Cardiac septum (tissue), 1 donor: ENCODE measurements at regions of chr20 and their contacts with region 1.

Region 1: DNA sequence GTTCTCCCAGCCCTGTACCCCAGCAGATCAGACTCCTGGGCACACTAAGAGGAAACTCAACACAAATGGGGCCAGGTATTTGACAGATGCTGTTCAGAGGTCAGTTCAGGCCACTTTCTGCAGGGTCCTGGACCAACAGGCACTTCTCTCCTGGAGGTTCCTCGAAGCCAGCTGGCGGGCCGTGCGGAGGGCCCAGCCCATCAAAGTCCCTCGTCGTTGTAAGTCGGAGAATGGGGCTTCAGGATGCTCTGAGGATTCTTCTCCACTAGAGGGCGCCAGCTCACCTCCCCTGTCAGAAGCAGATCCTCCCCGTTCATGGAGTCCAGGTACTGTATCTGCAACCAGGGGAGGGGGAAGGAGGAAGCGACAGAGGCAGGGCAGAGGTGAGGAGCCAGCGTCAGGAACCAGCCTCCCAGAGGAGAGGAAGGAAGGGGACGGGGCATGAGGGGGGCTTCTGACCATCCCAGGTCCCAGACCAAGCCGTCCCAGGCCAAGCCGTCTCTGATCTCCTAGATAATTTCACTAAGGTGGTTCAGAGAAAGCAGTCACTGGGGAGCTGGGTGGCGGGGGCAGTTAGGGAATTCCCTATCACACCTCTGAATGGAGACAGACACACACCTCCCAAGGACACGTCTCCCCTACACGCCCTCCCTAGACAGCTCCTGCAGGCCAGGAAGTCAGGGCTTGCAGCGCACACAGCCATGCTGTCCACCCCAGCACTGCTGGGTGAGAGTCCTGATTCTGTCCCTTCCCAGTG is 11.7 kb upstream of the FAM83C start:
- DNase-seq: peak; percentile 91

Region 2: GRCh38 chr20:35447082-35447789 is 143.3 kb after region 1 on chr20:
- intact Hi-C with region 1: loop called (anchors 2 kb)
- DNase-seq: peak; percentile 90